Dendritic cell treated with granulocyte-macrophage colony-stimulating factor and Interleukin-4, amounts not matched to agents 40 ng/mL and 50 ng/mL, for 4 days (primary cell): ENCODE measurements at regions of chr1 and their contacts with region 1.

Region 1: GRCh38 chr1:150235852-150236613 is at the start of gene ANP32E:
- H3K4me3 Mint-ChIP-seq: no peak within 1 kb of the TSS
- H3K27ac Mint-ChIP-seq: no peak within 1 kb of the TSS
- H3K4me1 Mint-ChIP-seq: peaks cover 17% of the 10 kb centered on the region
- H3K27me3 Mint-ChIP-seq: peaks cover 1% of the 10 kb centered on the region

Region 2: GRCh38 chr1:150034336-150034735 is 201.7 kb before region 1 on chr1:
- intact Hi-C with region 1: no loop called
- H3K4me3 Mint-ChIP-seq: no peak overlapping the region
- H3K27ac Mint-ChIP-seq: no peak overlapping the region
- H3K4me1 Mint-ChIP-seq: no peaks in the 10 kb centered on the region
- H3K27me3 Mint-ChIP-seq: peaks cover 58% of the 10 kb centered on the region

Region 3: DNA sequence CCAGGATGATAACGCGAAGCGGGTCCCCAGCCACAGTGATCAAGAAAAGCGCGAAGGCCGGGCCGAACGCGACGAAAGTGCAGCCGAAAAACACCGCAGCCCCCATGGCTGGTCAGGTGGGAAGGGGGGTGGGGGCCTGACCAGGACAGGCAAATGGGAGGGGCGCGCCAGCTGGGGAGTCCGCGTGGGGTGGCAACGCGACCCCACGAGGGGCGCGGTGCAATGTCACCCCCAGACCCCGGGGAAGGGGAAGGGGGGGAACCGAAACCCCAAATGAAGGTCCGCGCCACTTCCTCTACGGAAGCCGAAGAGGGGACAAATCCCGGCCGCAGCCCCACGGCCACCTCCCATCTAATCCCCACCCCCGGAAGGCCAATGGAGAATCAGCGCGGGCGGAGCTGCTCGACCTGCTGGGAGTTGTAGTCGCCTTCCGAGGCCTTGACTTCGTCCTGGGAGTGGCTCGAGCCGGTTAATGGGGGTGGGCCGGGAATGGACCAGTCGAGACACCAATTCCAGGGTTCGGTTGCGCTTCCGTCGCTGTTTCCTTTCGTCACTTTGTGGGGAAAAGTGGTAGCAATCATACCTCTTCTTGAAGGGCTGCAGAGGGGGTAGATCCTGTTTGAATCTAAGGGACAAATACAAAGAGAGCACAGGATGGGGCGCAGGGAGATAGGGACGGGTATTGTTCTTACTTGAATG is 32.8 kb after region 1 on chr1 and contains the start of gene APH1A:
- intact Hi-C with region 1: loop called (anchors 2 kb)
- H3K4me3 Mint-ChIP-seq: peak within 1 kb of the TSS; percentile 99
- H3K27ac Mint-ChIP-seq: peak within 1 kb of the TSS; percentile 95
- H3K4me1 Mint-ChIP-seq: peaks cover 76% of the 10 kb centered on the region
- H3K27me3 Mint-ChIP-seq: no peaks in the 10 kb centered on the region

Region 4: GRCh38 chr1:150309770-150310508 is 73.9 kb after region 1 on chr1:
- intact Hi-C with region 1: no loop called
- H3K4me3 Mint-ChIP-seq: no peak overlapping the region
- H3K27ac Mint-ChIP-seq: no peak overlapping the region
- H3K4me1 Mint-ChIP-seq: no peaks in the 10 kb centered on the region
- H3K27me3 Mint-ChIP-seq: no peaks in the 10 kb centered on the region